Activated CD8-positive, alpha-beta memory T cell treated with anti-CD3 and anti-CD28 coated beads, Interleukin-2, amount 10 ng/mL, durations not matched to agents 7 days and 5 days (primary cell): ENCODE measurements at regions of chr17 and their contacts with region 1.

Region 1: DNA sequence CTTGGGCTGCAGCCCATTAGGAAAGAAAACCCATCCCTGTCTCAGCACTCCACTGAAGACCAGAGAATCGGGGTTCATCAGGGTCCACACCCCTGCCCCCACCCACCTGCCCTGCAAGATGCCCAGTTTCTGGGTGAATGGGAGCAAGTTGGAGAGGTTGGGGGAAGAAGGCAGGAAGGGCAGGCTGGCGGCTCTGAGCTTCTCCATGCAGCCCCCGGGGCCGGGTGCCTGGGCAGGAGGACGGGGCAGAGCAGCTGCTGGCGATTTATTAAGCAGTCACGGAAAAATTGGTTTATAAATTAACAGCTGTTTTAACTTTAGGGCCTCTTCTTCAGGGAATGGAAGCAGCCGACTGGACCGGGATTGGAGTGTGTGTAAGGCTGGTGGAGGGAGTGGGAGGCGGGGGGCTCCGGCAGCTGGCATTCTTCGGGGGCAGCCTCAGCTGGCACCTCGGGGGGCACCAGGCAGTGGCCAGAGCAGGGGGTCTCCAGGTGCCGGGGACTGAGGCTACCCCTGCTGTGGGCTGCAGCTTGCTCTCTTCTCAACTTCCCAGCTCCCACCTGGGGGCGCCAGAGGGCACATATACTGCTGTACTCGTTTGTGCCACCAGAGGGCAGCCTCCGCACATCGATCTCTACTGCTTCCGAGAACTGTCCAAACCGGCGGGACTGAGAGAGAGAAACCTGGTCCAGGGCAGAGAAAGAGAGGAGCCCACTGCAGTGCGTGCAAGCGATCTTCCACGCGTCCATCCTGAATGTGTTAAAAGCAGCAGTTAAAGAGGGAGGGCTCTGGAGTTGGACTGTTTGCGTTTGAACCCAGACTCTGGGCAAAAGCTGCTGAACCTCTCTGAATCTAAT is 5.0 kb upstream of the PPP1R1B start:
- DNase-seq: peak; percentile 91
- ATAC-seq: peak; percentile 68
- H3K4me3 Mint-ChIP-seq: peak overlapping the region; percentile 77
- H3K27ac Mint-ChIP-seq: peak overlapping the region; percentile 98
- H3K4me1 Mint-ChIP-seq: peaks cover 23% of the 10 kb centered on the region
- H3K27me3 Mint-ChIP-seq: peaks cover 39% of the 10 kb centered on the region

Region 2: DNA sequence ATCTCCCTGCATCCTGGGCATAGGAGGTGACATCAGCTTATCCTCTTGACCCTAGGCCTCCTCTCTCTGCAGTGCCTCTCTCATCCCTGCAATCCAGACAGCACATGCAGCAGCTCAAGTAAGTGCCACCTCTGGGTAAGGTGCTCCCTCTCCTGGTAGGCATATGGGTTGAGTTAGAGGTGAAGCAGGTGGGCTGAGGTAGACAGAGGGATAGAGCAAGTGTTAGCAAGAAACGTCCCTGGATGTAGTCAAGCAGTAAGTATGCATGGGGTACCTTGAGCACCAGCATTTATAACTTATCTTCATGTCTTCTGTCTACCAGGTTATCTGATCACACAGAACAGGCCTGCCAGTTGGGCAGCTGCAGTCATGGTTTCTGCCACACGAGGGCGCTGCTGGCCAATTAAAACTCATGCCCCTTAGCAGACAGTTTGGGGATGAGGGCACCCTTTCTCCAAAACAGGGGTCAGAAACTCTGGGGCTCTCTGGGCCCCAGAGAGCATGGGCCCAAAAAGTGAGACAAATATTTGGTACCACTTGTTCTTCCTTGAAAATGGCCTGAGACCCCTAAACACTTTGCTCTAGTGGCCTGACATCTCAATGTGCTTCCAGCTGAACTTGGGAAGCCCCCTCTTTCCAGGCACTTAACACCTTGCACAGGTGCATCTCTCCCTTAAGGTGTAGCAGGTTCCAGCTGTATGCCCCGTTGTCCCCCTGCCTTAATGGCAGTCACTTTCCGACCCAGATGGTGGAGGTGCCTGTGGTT is 73.9 kb before region 1 on chr17:
- CTCF ChIA-PET with region 1: interaction called, 108 read pairs
- DNase-seq: peak; percentile 81
- ATAC-seq: peak; percentile 79
- H3K4me3 Mint-ChIP-seq: no peak overlapping the region
- H3K27ac Mint-ChIP-seq: peak overlapping the region; percentile 6
- H3K4me1 Mint-ChIP-seq: no peaks in the 10 kb centered on the region
- H3K27me3 Mint-ChIP-seq: no peaks in the 10 kb centered on the region

Region 3: DNA sequence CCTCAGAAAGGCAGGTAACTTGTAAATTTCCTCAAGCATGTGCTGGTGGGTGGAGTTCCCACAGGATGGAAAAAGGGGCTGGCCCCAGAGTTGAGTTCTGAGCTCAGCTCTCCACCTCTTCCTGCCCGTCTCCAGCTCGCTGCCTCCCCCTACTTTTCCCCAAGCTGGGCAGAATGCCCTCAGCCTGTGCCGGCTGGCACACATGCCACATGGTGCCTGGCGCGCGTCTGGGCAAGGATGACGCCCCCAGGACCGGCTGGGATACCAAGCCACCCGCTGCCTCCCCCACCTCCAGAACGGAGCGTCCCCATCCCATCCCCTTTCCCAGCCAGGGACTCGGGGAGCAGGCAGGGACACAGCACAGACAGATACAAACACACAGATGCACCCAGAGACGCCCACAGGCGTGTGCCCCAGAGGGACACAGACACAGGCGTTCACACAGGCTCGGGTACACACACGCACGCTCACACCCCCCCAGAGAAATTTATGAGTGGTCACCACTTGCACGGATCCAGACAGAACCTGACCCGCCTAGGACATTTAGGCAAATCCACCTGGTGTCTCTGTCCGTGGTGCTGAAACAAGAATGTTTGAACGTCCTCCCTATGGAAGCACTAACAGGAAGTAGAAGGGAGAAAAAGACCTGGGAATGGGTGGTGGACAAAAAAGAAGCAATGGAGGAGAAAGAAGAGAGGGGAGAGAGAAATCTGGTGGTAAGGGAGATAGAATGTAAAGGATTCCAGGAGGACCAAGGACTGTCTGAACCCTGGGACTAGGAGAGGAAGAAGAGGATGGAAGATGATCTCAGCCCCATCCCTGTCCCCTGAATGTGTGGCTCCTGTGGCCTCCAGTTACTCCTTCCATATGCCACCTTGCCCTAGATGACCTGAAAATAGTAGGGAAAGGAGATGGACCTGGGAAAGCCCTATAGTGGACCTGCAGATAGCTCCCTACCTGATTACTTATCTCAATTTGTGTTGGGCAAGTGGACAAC is 29.5 kb before region 1 on chr17:
- CTCF ChIA-PET with region 1: interaction called, 29 read pairs
- DNase-seq: peak; percentile 57
- ATAC-seq: no peak
- H3K4me3 Mint-ChIP-seq: no peak overlapping the region
- H3K27ac Mint-ChIP-seq: no peak overlapping the region
- H3K4me1 Mint-ChIP-seq: peaks cover 2% of the 10 kb centered on the region
- H3K27me3 Mint-ChIP-seq: peaks cover 54% of the 10 kb centered on the region

Region 4: GRCh38 chr17:39636927-39637736 is 15.4 kb after region 1 on chr17 and contains the start of gene STARD3:
- CTCF ChIA-PET with region 1: interaction called, 307 read pairs
- DNase-seq: peak; percentile 94
- ATAC-seq: peak; percentile 91
- H3K4me3 Mint-ChIP-seq: peak within 1 kb of the TSS; percentile 90
- H3K27ac Mint-ChIP-seq: peak within 1 kb of the TSS; percentile 81
- H3K4me1 Mint-ChIP-seq: peaks cover 41% of the 10 kb centered on the region
- H3K27me3 Mint-ChIP-seq: no peaks in the 10 kb centered on the region
- total RNA-seq, gene STARD3: 70.5 to 75.7 TPM

Region 5: DNA sequence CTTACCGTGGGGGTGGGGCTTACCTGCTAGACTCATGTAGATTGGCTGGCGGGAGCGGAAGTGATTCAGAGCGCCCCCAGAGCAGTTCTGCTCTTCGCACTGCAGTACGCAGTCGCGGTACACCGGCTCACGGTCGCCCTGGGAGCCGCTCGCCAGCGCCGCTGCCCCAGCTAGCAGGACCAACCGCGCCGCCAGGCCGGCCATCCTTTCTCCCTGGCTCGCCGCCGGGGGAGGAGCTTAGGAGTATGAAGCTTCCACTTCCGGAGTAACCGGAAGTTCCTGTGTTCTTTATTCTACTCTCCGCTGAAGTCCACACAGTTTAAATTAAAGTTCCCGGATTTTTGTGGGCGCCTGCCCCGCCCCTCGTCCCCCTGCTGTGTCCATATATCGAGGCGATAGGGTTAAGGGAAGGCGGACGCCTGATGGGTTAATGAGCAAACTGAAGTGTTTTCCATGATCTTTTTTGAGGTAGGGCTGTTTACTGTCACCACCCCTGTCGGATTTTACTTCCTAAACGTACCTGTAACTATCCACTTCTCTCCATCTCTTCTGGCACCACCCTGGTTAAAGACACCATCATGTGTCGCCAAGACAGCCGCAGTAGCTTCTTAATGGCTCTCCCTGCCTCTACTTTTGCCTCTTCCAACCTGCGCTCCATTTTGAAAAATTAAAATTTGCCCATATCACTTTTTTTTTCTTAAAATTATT is 66.2 kb after region 1 on chr17 and contains the start of gene PGAP3:
- CTCF ChIA-PET with region 1: interaction called, 49 read pairs
- DNase-seq: peak; percentile 93
- ATAC-seq: peak; percentile 94
- H3K4me3 Mint-ChIP-seq: peak within 1 kb of the TSS; percentile 91
- H3K27ac Mint-ChIP-seq: peak within 1 kb of the TSS; percentile 92
- H3K4me1 Mint-ChIP-seq: peaks cover 18% of the 10 kb centered on the region
- H3K27me3 Mint-ChIP-seq: no peaks in the 10 kb centered on the region
- total RNA-seq, gene PGAP3: 10.5 to 13.8 TPM

Region 6: DNA sequence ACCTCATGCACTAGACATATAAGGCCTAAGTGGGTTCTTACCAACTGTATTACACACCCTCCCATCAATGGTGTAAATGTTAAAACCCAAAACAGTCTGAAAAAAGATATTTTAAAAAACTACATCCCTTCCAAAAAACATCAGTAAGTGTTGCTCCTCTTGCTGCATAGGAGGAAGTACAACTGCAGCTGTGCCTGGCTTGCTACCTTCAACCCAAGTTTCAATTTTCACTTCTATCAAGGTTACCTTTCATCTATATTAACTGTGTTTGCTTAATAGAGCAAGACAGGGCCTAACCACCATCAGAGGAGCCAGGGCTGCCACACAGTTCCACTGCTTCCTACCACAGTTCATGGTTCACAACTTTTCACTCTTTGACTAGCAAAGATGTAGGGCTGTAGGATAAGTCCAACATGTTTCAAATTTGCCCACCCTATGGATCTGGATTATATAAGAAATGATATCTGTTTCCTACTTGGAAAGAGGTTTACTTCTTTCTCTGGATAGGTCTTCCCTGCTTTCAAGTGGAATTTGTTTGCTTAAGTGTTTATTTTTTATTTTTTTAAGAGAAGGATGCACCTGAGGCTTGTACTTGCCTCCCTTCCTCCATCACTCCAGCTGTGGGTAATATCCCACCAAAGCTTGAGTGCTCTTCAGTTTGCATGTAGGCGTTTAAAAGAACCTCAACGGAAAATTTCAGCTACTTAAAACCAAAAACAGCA is 172.7 kb after region 1 on chr17:
- CTCF ChIA-PET with region 1: interaction called, 10 read pairs
- DNase-seq: peak; percentile 60
- ATAC-seq: peak; percentile 48
- H3K4me3 Mint-ChIP-seq: peak overlapping the region; percentile 31
- H3K27ac Mint-ChIP-seq: peak overlapping the region; percentile 86
- H3K4me1 Mint-ChIP-seq: peaks cover 64% of the 10 kb centered on the region
- H3K27me3 Mint-ChIP-seq: no peaks in the 10 kb centered on the region

Region 7: DNA sequence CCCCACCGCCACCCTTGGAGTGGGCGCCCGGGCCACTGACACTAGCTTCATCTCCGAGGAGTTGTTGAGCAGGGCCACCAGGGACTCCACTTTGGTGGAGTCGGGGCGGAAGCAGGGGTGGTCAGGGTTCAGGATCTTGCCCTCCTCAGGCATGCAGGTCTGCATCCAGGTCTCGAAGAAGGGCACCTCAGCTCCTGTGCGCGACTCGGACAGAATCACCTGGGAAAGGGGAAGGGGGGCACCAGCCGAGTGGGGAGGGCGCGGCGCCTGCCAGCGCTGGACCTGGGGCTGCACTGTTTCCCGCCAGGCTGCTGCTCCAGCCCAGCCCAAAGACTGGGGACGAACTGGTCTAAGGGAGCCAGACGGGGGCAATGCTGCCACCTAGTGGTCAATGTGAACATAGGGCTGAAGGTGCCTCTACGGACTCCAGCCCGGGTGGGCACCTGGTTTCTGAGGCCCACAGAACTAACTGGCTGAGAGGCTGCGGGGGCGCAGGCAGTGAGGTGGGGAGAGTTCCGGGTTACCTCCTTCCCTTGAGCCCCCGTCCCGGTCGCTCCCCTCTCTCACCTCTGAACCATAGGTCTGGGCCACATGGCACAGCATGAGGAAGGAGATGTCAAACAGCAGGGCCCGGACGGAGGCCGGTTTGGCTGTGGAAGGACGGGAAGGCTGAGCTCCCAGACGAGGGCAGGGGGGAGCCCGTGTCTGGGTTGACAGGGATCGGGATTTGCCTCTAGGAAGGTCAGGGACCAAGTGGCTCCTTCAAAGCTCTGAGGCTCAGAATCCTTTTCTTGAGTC is 405.3 kb after region 1 on chr17:
- CTCF ChIA-PET with region 1: interaction called, 17 read pairs
- DNase-seq: peak; percentile 85
- ATAC-seq: peak; percentile 95
- H3K4me3 Mint-ChIP-seq: no peak overlapping the region
- H3K27ac Mint-ChIP-seq: no peak overlapping the region
- H3K4me1 Mint-ChIP-seq: peaks cover 23% of the 10 kb centered on the region
- H3K27me3 Mint-ChIP-seq: no peaks in the 10 kb centered on the region